Activated B cell treated with CpG ODN at 0.5 μM for 24 hours (primary cell): ENCODE measurements at regions of chr13 and their contacts with region 1.

Region 1: DNA sequence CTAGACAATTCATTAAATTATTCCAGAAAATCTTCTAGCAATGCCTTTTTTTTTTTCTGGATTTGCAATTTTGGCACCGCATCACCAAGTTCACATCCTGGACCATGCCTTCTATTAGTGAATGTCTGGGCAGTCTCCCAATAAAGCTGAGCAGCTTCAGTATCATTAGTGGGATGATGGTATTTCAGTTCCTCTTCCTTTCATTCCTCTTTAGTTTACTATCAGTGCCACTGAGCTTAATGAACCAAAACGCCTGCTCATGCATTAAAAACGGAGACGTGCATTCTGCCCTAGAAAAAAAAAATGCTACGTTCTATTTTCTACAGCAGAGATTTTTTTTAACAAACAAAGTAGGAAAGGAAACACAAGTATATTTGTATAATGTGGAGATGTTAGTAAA is 343.0 kb downstream of the PCDH9 start:
- DNase-seq: no peak
- ATAC-seq: peak; percentile 84
- H3K4me3 Mint-ChIP-seq: peak overlapping the region; percentile 56
- H3K27ac Mint-ChIP-seq: peak overlapping the region; percentile 31
- H3K4me1 Mint-ChIP-seq: peaks cover 41% of the 10 kb centered on the region
- H3K27me3 Mint-ChIP-seq: no peaks in the 10 kb centered on the region
- CTCF ChIP-seq: no peak

Region 2: DNA sequence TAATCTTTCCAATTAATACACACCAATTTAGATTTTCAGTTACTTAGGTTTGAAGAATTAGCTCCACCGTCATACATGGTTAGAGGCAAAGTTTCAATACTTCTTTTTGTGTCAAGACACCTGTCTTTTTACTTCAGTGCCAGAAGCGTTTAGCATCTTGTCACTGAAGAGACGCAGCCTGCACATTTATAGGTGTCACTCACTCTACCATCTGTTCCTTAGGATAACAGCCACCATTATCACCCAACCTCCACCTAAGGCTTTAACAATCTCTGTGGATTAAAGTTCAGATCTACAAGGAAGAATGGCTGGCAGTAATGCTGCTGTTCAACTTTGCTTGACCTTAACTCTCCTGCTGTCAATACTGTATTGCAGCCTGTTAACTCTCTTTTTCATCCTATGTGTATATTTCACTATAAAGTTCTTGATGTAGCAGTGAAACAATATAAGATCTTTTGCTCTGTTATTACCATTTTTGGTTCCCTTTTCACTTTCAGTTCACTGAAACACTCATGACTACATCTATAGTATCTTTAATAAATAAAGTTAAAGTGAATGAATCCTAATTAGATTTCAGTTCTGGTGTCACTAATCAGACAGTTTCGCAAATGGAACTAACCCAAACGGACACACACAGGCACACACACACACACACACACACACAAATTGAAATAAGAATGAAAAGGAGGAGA is 92.6 kb before region 1 on chr13:
- CTCF ChIA-PET with region 1: no interaction called
- POLR2A ChIA-PET with region 1: no interaction called
- intact Hi-C with region 1: loop called (anchors 2 kb)
- DNase-seq: no peak
- ATAC-seq: peak; percentile 75
- H3K4me3 Mint-ChIP-seq: peak overlapping the region; percentile 13
- H3K27ac Mint-ChIP-seq: peak overlapping the region; percentile 72
- H3K4me1 Mint-ChIP-seq: peaks cover 11% of the 10 kb centered on the region
- H3K27me3 Mint-ChIP-seq: no peaks in the 10 kb centered on the region
- CTCF ChIP-seq: no peak